ENCODE measurements at regions of chr19 and their contacts with region 1.

Region 1: DNA sequence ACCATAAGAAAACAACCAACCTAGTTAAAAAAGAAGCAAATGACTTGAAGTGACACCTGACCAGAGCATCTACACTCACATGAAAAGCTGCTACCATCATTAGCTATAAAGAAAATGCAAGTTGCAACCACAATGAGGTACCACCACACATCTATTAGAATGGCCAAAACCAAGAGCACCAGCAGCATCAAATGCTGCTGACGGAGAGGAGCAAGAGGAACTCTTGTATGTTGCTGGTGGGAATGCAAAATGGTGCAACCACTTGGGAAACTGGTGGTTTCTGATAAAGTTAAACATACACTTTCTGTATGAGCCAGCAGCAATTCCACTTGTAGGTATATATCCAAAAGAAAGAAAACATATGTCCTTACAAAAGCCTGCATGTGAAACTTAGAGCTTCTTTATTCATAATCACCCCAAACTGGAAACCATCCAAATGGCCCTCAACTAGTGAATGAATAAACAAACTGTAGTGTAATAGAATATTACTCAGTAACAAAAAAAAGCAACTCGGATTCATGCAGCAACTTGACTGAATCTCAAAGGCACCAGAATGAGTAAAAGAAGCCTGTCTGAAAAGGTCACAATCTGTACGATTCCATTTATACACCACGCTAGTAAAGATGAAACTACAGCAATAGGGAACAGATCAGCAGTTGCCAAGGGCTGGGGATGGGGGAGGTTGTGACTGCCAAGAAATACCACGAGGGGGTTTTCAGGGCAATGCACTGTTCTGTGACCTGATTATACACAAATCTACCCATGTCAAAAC is 60.9 kb upstream of the RANBP3 start:
- DNase-seq: peak; percentile 13

Region 2: DNA sequence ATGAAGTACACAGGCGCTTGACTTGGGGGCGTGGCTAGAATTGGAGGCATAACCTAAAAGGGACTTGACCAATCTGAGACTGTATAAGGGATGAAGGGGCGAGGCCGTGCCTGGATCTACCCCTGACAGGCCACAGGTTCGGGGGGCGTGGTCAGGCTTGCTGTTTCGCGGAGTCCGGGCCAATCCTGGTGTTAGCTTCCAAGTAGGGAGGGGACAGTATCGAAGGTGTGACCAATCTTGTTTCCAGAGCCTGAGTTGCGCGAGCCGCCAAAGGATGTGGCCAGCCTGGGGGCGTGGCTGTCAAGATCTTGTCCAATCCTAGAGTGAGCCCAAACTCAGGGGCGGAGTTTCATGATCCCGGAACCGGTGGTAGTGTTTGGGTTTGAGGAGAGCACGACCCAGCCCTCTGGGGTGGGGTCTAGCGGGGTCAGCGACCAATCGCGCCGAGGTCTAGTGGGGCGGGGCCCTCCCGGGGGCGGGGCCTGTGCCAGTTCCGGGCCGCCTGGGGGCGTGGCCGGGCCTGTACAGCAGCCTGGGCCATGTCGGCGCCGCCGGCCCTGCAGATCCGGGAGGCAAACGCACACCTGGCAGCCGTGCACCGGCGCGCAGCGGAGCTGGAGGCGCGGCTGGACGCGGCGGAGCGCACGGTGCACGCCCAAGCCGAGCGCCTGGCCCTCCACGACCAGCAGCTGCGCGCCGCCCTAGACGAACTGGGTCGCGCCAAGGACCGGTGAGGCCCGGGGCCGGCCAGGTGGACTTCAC is 134.3 kb before region 1 on chr19 and contains the start of gene VMAC:
- intact Hi-C with region 1: no loop called
- DNase-seq: peak; percentile 100
- total RNA-seq, gene VMAC: 2.4 to 5.0 TPM

Region 3: GRCh38 chr19:5990289-5990797 is 48.5 kb before region 1 on chr19:
- intact Hi-C with region 1: loop called in 1 of 2 experiments (anchors 1 kb)
- DNase-seq: no peak

Region 4: GRCh38 chr19:6066661-6067646 is 28.1 kb after region 1 on chr19:
- intact Hi-C with region 1: no loop called
- DNase-seq: peak; percentile 98